Right cardiac atrium (tissue), 5 donors: ENCODE measurements at regions of chr11 and their contacts with region 1.

Region 1: DNA sequence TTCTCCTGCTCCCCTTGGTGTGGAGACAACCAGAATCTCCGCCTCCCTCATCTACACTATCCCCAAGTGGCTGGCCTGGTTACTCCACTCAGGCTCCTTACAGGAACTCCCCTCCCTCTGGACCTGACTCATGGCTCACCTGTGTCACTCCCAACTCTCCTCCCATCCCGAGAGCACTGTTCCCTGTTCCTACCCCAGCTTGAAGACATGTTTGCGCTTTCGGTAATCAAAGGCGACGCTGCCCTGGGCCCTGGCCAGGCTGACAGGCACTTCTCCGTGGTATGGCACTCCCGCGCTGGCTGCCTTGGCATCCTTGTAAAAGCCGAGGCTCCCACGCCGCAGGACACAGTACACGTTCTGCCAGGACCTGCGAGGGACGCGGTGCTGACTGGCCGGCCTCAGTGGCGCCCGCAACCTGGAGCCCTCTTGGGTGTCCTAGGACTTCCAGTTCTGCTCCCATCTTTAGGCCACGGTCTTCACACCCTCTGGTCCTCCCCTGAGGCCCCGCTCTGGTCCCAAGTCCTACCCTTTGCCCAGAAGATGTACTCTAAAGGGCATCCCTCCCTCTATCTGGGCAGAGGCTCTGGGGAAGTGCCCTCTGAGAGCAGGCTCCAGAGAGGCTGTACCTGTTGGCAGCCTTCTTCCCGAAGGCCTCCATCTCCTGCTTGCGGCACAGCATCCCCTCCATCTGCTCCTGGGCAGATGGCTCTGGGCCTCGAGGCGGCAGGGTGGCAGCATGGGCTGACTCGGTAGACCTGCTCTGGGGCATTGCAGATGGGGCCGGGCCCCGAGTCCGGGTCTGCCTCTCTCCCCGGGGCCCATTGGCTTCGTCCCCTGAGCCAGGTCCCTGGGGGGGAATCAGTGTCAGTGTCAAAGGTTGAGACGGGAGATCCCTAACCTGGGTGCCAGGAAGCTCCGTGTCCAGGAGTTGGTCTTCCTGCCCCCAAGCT is 9.4 kb upstream of the RBM4B start:
- DNase-seq: peak in 1 of 3 donors; percentile 63
- ATAC-seq: peak in 1 of 2 donors; percentile 12
- H3K4me3 ChIP-seq: no peak overlapping the region
- H3K27ac ChIP-seq: no peak overlapping the region
- H3K4me1 ChIP-seq: no peaks in the 10 kb centered on the region
- H3K27me3 ChIP-seq: no peaks in the 10 kb centered on the region

Region 2: DNA sequence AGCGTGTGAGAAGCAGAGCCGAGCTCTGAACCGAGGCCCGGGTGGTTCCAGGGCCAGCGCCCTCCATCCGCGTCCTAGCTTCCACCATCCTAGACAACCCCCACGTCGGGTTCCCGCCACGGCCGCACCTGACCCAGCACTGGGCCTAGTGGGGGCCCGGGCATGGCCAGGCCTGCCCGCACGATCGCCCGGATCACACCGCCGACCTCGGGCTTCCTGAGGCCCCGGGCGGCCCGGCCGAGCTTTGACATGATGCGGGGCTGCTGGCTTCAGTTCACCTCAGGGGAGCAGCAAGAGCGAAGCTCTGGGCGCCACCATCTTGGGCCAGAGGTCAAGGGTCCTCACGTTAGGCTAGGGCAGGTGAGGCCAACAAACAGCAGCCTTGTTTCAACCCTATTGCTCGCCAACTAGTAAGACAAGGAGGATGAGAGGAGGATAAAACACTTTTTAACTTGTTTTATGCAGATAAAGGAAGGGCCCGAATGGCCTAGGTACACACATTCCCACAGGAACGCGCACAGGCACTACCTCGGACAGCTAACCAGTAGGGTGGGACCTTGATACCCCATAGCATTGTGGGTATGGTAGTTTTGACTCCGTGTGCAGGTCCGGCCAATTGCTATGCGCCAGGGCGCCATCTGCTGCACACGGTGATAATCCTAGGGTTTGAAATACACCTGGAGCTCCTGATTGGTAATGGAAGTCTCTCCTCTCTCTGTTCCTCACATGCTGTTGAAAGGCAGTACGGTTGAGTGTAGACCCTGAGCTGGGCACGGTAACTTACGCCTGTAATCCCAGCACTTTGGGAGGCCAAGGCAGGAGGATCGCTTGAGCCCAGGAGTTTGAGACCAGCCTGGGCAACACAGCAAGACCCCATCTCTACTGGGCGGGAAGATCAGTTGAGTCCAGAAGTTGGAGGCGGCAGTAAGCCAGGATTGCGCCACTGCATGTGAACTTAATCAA is 248.3 kb before region 1 on chr11 and contains the start of gene MRPL11:
- intact Hi-C with region 1: loop called in 1 of 4 experiments (anchors 10 kb)
- DNase-seq: peak; percentile 89 to 97 (median 93)
- ATAC-seq: peak; percentile 99
- H3K4me3 ChIP-seq: peak within 1 kb of the TSS; percentile 86
- H3K27ac ChIP-seq: peak within 1 kb of the TSS; percentile 90
- H3K4me1 ChIP-seq: no peaks in the 10 kb centered on the region
- H3K27me3 ChIP-seq: no peaks in the 10 kb centered on the region
- total RNA-seq, gene MRPL11: 47.5 to 53.0 (median 50.1) TPM

Region 3: DNA sequence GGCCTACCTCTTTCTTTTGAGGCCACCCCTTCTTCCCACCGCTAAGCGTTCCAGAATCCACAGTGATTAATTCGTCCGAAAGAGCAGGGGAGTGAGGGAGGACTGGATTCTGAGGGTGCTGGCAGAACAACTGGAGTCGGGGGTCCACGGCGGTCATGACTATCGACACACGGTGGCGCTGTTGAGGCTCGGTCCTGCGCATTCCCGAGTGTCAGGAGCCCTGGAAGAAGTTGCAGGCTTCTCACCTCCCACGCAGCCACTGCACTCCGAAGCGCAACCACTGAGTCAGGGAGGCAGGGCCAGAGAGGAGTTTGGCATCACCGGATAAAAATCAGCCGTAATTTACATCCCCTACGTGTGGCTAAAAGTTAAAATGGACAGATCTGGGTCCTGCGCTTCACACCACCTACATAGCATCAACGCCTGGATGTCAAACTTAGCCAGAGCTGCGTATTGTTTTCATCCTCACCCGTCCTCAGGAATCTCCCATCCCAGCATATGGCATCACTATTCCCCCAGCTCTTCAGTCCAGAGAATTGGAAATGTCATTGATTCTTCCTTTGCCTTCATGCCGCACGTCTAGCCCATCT is 108.0 kb before region 1 on chr11:
- intact Hi-C with region 1: loop called in 1 of 4 experiments (anchors 5 kb)
- DNase-seq: peak; percentile 87 to 94 (median 92)
- ATAC-seq: peak; percentile 92 to 96
- H3K4me3 ChIP-seq: no peak overlapping the region
- H3K27ac ChIP-seq: no peak overlapping the region
- H3K4me1 ChIP-seq: no peaks in the 10 kb centered on the region
- H3K27me3 ChIP-seq: no peaks in the 10 kb centered on the region

Region 4: GRCh38 chr11:66815646-66816045 is 128.6 kb after region 1 on chr11:
- intact Hi-C with region 1: no loop called
- DNase-seq: no peak
- ATAC-seq: no peak
- H3K4me3 ChIP-seq: no peak overlapping the region
- H3K27ac ChIP-seq: no peak overlapping the region
- H3K4me1 ChIP-seq: no peaks in the 10 kb centered on the region
- H3K27me3 ChIP-seq: no peaks in the 10 kb centered on the region